GM12878 (cell line): ENCODE measurements at regions of chr10 and their contacts with region 1.

Region 1: DNA sequence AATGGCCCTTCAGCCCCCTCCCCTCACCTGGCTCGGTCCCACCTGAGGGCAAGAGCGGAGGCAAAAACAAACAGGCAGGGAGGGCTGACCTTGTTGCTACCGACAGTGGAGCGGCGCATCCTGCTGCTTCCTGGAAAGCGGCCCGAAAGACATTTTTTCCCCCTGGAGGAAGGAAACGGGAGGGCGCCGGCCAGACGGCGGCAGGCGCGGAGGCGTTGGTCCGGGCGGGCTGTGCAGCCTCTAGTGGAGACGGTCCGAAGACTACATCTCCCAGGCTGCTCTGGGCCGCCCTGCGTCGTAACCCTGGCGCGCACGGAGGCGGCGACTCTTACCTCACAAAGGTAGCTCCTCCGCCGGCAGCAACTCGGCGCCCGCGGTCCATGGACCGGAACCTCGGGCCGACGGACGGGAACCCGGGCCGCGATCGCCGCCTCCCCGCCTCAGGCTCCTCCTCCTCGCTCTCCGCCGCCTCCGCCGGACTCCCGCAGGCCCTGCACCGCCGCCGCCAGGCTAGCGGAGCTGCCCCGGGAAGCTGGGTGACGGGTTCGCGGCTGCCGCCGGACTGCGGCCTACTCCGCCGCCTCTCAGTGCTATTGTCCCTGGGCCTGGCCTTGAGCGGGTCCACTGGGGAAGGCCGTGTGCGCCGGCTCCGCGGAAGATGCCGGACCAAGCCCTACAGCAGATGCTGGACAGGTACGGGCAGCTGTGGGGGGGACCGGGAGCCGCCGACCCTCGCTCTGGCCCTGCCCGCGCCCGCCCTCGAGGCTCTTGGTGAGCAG is at the starts of genes CPEB3 and MARCHF5:
- DNase-seq: peak; percentile 77
- ATAC-seq: peak; percentile 97
- H3K4me3 ChIP-seq: peak within 1 kb of the TSS; percentile 96
- H3K27ac ChIP-seq: peak within 1 kb of the TSS; percentile 79
- H3K4me1 ChIP-seq: peaks cover 3% of the 10 kb centered on the region; the same call in 1 of the 2 replicates
- H3K27me3 ChIP-seq: no peaks in the 10 kb centered on the region
- CTCF ChIP-seq: peak; percentile 41 to 52 (median 51)
- EP300 ChIP-seq: no peak
- POLR2A ChIP-seq: peak; percentile 81
- RAD21 ChIP-seq: peak; percentile 28
- polyA plus RNA-seq, gene CPEB3: 0.50 to 0.53 TPM
- polyA plus RNA-seq, gene MARCHF5: 4.8 to 5.8 TPM

Region 2: GRCh38 chr10:92087750-92088395 is 203.2 kb before region 1 on chr10:
- CTCF ChIA-PET with region 1: interaction called, 117 read pairs
- POLR2A ChIA-PET with region 1: interaction called, 7 read pairs
- RAD21 ChIA-PET with region 1: interaction called, 60 read pairs
- SMC1A ChIA-PET with region 1: interaction called, 80 read pairs
- in situ Hi-C with region 1: loop called (anchors 5 kb)
- intact Hi-C with region 1: loop called (anchors 1 kb)
- DNase-seq: peak; percentile 64
- ATAC-seq: peak; percentile 98
- H3K4me3 ChIP-seq: no peak overlapping the region
- H3K27ac ChIP-seq: no peak overlapping the region
- H3K4me1 ChIP-seq: peaks cover 19% of the 10 kb centered on the region
- H3K27me3 ChIP-seq: no peaks in the 10 kb centered on the region
- CTCF ChIP-seq: peak; percentile 71 to 98 (median 89)
- EP300 ChIP-seq: no peak
- POLR2A ChIP-seq: no peak
- RAD21 ChIP-seq: peak; percentile 100

Region 3: DNA sequence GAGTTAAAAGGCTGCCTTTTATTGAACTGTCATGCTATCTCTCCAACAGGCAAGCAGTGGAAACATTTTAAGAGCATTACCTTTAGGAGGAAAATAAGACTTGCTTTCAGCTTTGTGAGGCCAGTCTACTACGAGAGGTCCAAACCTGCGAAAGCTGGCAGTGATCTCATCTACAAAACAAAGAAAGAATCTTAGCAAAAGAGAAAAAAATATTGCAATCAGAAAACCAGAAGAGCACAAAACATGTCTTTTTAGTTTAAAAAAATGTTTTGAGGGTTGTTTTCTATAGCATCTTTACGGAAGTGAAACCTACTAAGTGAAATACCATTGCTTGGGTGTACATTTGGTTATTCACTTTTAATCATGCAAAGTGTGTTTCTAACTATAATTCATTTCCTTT is 148.1 kb before region 1 on chr10:
- CTCF ChIA-PET with region 1: no interaction called
- POLR2A ChIA-PET with region 1: interaction called, 3 read pairs
- RAD21 ChIA-PET with region 1: interaction called, 3 read pairs
- SMC1A ChIA-PET with region 1: interaction called, 3 read pairs
- in situ Hi-C with region 1: no loop called
- intact Hi-C with region 1: loop called (anchors 2 kb)
- DNase-seq: peak; percentile 43
- ATAC-seq: peak; percentile 79
- H3K4me3 ChIP-seq: peak overlapping the region; percentile 39
- H3K27ac ChIP-seq: peak overlapping the region; percentile 76
- H3K4me1 ChIP-seq: peaks cover 15% of the 10 kb centered on the region
- H3K27me3 ChIP-seq: no peaks in the 10 kb centered on the region
- CTCF ChIP-seq: no peak
- EP300 ChIP-seq: peak; percentile 67 to 79; a peak in 2 of 4 replicates
- POLR2A ChIP-seq: no peak
- RAD21 ChIP-seq: no peak

Region 4: GRCh38 chr10:92240289-92241157 is 50.5 kb before region 1 on chr10:
- CTCF ChIA-PET with region 1: interaction called, 10 read pairs
- POLR2A ChIA-PET with region 1: interaction called, 4 read pairs
- RAD21 ChIA-PET with region 1: interaction called, 21 read pairs
- SMC1A ChIA-PET with region 1: interaction called, 31 read pairs
- in situ Hi-C with region 1: no loop called
- intact Hi-C with region 1: loop called (anchors 2 kb)
- DNase-seq: peak; percentile 53
- ATAC-seq: peak; percentile 63
- H3K4me3 ChIP-seq: peak overlapping the region; percentile 90
- H3K27ac ChIP-seq: peak overlapping the region; percentile 47
- H3K4me1 ChIP-seq: peaks cover 14% of the 10 kb centered on the region
- H3K27me3 ChIP-seq: no peaks in the 10 kb centered on the region; a peak in 1 of 4 replicates
- CTCF ChIP-seq: no peak
- EP300 ChIP-seq: peak in 1 of 2 experiments; percentile 58; a peak in 1 of 4 replicates
- POLR2A ChIP-seq: peak; percentile 48; the same call in 1 of the 2 replicates
- RAD21 ChIP-seq: no peak

Region 5: DNA sequence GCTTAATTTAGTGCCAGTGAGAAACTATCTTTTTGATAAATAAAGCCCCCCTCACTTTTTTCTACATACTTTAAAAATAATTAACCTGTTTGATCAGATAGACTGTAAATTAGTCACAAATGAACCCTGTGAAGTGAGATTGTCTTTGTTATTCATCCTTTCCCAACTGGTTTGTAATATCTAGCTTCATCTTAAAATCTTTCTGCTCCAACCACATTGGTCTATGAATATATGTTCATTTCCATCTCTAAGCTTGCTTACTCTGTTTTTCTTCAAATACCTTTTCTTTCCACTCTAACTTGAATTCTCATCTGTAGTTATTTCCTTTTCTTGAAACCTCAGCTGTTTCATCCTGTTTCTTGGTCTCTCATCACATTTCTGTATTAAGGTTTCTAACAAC is 12.1 kb after region 1 on chr10:
- CTCF ChIA-PET with region 1: interaction called, 38 read pairs
- POLR2A ChIA-PET with region 1: interaction called, 6 read pairs
- RAD21 ChIA-PET with region 1: interaction called, 5 read pairs
- SMC1A ChIA-PET with region 1: interaction called, 19 read pairs
- in situ Hi-C with region 1: no loop called
- intact Hi-C with region 1: no loop called
- DNase-seq: no peak
- ATAC-seq: no peak; the same call in 2 of the 3 replicates
- H3K4me3 ChIP-seq: no peak overlapping the region
- H3K27ac ChIP-seq: no peak overlapping the region
- H3K4me1 ChIP-seq: no peaks in the 10 kb centered on the region
- H3K27me3 ChIP-seq: no peaks in the 10 kb centered on the region
- CTCF ChIP-seq: no peak
- EP300 ChIP-seq: no peak
- POLR2A ChIP-seq: no peak
- RAD21 ChIP-seq: no peak

Region 6: GRCh38 chr10:94260455-94260854 is 1969.4 kb after region 1 on chr10:
- CTCF ChIA-PET with region 1: no interaction called
- POLR2A ChIA-PET with region 1: no interaction called
- RAD21 ChIA-PET with region 1: no interaction called
- SMC1A ChIA-PET with region 1: no interaction called
- in situ Hi-C with region 1: no loop called
- intact Hi-C with region 1: no loop called
- DNase-seq: no peak
- ATAC-seq: no peak
- H3K4me3 ChIP-seq: no peak overlapping the region
- H3K27ac ChIP-seq: no peak overlapping the region
- H3K4me1 ChIP-seq: no peaks in the 10 kb centered on the region
- H3K27me3 ChIP-seq: no peaks in the 10 kb centered on the region
- CTCF ChIP-seq: no peak
- EP300 ChIP-seq: no peak
- POLR2A ChIP-seq: no peak
- RAD21 ChIP-seq: no peak